CD4-positive, alpha-beta T cell (primary cell): ENCODE measurements at regions of chr6 and their contacts with region 1.

Region 1: DNA sequence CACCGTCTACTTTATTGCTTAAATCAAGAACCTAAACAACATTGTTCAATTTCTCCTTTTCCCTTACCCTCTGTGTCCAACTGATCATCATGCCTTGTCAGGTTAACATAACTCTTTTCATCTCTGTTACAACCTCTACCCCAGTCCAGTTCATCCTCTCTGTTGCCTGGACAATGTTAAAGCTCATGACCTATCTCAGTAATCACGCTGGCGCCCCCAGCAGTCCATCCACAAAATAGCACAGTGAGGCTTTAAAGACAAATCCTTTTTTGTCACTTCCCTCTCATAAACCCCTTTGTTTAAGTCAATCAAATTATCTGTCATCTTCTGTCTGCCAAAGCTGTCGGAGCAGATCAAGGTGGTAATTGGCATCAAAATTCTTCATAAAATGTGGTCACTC is 140.1 kb downstream of the QKI start:
- DNase-seq: peak; percentile 26 to 70 (median 52)
- ATAC-seq: peak; percentile 54
- H3K4me3 ChIP-seq: no peak overlapping the region
- H3K4me3 Mint-ChIP-seq: no peak overlapping the region
- H3K27ac ChIP-seq: no peak overlapping the region
- H3K27ac Mint-ChIP-seq: no peak overlapping the region
- H3K4me1 ChIP-seq: no peaks in the 10 kb centered on the region
- H3K4me1 Mint-ChIP-seq: peaks cover 3% of the 10 kb centered on the region
- H3K27me3 ChIP-seq: no peaks in the 10 kb centered on the region
- H3K27me3 Mint-ChIP-seq: no peaks in the 10 kb centered on the region
- CTCF ChIP-seq: peak; percentile 40

Region 2: GRCh38 chr6:163170294-163170883 is 384.3 kb before region 1 on chr6:
- CTCF ChIA-PET with region 1: interaction called, 3 read pairs
- POLR2A ChIA-PET with region 1: no interaction called
- intact Hi-C with region 1: loop called (anchors 2 to 10 kb)
- DNase-seq: peak in 5 of 14 experiments; percentile 3 to 43 (median 13)
- ATAC-seq: no peak
- H3K4me3 ChIP-seq: no peak overlapping the region
- H3K4me3 Mint-ChIP-seq: no peak overlapping the region
- H3K27ac ChIP-seq: no peak overlapping the region
- H3K27ac Mint-ChIP-seq: no peak overlapping the region
- H3K4me1 ChIP-seq: peaks cover 3% of the 10 kb centered on the region
- H3K4me1 Mint-ChIP-seq: no peaks in the 10 kb centered on the region
- H3K27me3 ChIP-seq: no peaks in the 10 kb centered on the region
- H3K27me3 Mint-ChIP-seq: peaks cover 3% of the 10 kb centered on the region
- CTCF ChIP-seq: peak; percentile 73

Region 3: GRCh38 chr6:163427498-163428254 is 127.0 kb before region 1 on chr6:
- CTCF ChIA-PET with region 1: interaction called, 5 read pairs
- POLR2A ChIA-PET with region 1: no interaction called
- intact Hi-C with region 1: loop called in 1 of 2 experiments (anchors 1 kb)
- DNase-seq: peak in 3 of 14 experiments; percentile 52 to 61 (median 61)
- ATAC-seq: no peak
- H3K4me3 ChIP-seq: no peak overlapping the region
- H3K4me3 Mint-ChIP-seq: no peak overlapping the region
- H3K27ac ChIP-seq: no peak overlapping the region
- H3K27ac Mint-ChIP-seq: no peak overlapping the region
- H3K4me1 ChIP-seq: no peaks in the 10 kb centered on the region
- H3K4me1 Mint-ChIP-seq: peaks cover 63% of the 10 kb centered on the region
- H3K27me3 ChIP-seq: no peaks in the 10 kb centered on the region
- H3K27me3 Mint-ChIP-seq: no peaks in the 10 kb centered on the region
- CTCF ChIP-seq: peak; percentile 29

Region 4: DNA sequence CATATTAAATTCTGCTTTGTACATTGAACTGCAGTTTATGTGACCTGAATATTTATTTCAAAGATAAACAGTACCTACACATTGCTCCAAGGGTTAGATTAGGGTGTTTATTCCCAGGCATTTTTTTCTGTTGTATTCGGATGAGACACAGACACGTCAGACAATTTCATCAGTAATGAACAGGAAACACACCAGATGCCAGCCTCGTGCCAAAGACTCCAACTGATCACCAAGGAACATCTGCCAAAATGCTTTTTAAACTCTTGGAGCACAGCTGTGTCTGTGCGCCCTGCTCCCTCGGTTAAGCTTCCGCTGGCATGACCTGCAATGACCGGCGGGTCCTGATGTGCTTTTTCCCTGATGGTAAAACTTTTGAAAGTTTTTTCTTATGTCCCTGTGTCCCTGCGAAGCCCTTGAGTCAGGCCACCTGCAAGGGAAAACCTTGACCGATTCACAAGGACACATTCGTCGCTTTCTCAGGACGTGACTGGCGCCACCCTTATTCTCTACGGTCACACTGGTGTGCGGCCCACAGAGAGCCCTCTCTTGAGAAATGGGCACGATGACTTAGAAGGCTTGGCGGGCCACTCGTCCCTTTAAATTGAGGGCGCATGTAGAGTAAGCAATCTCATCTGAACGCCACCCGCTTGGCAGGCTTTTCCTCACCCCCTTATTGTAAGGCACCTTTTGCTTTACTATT is 33.7 kb after region 1 on chr6:
- CTCF ChIA-PET with region 1: no interaction called
- POLR2A ChIA-PET with region 1: no interaction called
- intact Hi-C with region 1: no loop called
- DNase-seq: no peak
- ATAC-seq: no peak
- H3K4me3 ChIP-seq: no peak overlapping the region
- H3K4me3 Mint-ChIP-seq: no peak overlapping the region
- H3K27ac ChIP-seq: no peak overlapping the region
- H3K27ac Mint-ChIP-seq: no peak overlapping the region
- H3K4me1 ChIP-seq: no peaks in the 10 kb centered on the region
- H3K4me1 Mint-ChIP-seq: no peaks in the 10 kb centered on the region
- H3K27me3 ChIP-seq: peaks cover 0 to 4% of the 10 kb centered on the region in 2 experiments
- H3K27me3 Mint-ChIP-seq: peaks cover 31% of the 10 kb centered on the region
- CTCF ChIP-seq: no peak